GM12878 (cell line): ENCODE measurements at regions of chr2 and their contacts with region 1.

Region 1: GRCh38 chr2:54704688-54705605 is 18.5 kb upstream of the EML6 start:
- DNase-seq: no peak
- ATAC-seq: peak; percentile 78
- H3K4me3 ChIP-seq: no peak overlapping the region
- H3K27ac ChIP-seq: no peak overlapping the region
- H3K4me1 ChIP-seq: no peaks in the 10 kb centered on the region
- H3K27me3 ChIP-seq: peaks cover 0 to 5% of the 10 kb centered on the region in 2 experiments; a peak in 2 of 4 replicates
- CTCF ChIP-seq: peak; percentile 35 to 77 (median 47); a peak in 4 of 6 replicates
- EP300 ChIP-seq: no peak
- POLR2A ChIP-seq: no peak
- RAD21 ChIP-seq: peak; percentile 86

Region 2: GRCh38 chr2:54492335-54492734 is 212.6 kb before region 1 on chr2:
- CTCF ChIA-PET with region 1: interaction called, 12 read pairs
- POLR2A ChIA-PET with region 1: no interaction called
- RAD21 ChIA-PET with region 1: no interaction called
- SMC1A ChIA-PET with region 1: interaction called, 3 read pairs
- in situ Hi-C with region 1: no loop called
- intact Hi-C with region 1: no loop called
- DNase-seq: no peak
- ATAC-seq: no peak
- H3K4me3 ChIP-seq: no peak overlapping the region
- H3K27ac ChIP-seq: no peak overlapping the region
- H3K4me1 ChIP-seq: no peaks in the 10 kb centered on the region
- H3K27me3 ChIP-seq: no peaks in the 10 kb centered on the region
- CTCF ChIP-seq: no peak
- EP300 ChIP-seq: no peak
- POLR2A ChIP-seq: no peak
- RAD21 ChIP-seq: no peak

Region 3: DNA sequence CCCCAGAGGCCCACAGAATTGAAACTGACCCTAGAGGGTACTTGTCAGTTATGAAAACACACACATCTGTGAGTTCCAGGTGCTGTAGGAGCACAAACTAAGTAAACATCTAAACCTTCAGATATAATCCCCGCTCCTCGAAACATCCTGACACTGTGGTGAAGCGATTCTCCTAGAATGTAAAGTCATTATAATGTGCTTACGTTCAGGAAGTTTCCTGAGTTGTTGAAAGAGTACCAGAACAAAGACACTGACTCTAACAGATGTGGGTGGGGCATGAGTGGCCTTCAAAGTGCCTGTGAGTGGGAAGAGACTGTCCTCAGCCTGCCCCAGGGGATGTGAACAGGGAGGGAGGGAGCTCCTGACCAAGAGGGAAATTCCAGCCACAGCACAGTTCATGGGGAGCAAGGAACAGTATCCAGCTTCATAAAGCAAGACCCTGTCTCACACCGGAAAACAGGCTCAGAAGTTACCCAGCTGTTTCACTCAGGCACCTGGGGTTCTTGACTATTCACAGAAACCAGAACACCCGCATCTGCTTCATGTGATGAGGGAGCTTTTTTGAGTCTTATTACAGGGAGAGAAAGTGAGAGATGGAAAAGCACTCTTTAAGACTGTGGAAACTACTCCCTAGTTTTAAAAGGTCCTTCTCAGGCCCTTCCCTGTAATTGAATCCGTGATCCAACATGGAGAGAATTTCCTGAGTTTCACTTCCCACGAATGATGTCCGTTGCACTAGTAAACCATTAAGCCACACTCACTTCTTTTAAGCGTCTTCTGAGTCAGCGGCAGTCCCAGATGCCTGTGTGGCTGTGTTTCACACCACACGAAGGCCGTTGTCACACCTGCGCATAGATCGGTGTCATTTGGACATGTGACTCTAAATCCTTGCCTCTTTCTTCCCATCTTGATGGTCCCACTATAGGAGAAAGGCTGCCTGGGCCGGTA is 70.1 kb before region 1 on chr2:
- CTCF ChIA-PET with region 1: interaction called, 5 read pairs
- POLR2A ChIA-PET with region 1: no interaction called
- RAD21 ChIA-PET with region 1: interaction called, 5 read pairs
- SMC1A ChIA-PET with region 1: interaction called, 12 read pairs
- in situ Hi-C with region 1: no loop called
- intact Hi-C with region 1: no loop called
- DNase-seq: peak; percentile 93
- ATAC-seq: peak; percentile 81
- H3K4me3 ChIP-seq: peak overlapping the region; percentile 38
- H3K27ac ChIP-seq: peak overlapping the region; percentile 95
- H3K4me1 ChIP-seq: peaks cover 57% of the 10 kb centered on the region
- H3K27me3 ChIP-seq: no peaks in the 10 kb centered on the region
- CTCF ChIP-seq: no peak
- EP300 ChIP-seq: peak; percentile 81 to 84; a peak in 2 of 4 replicates
- POLR2A ChIP-seq: peak; percentile 52
- RAD21 ChIP-seq: 0 out of 2 replicates have a peak, but pooled peaks have one; percentile 0

Region 4: GRCh38 chr2:54673501-54673998 is 31.4 kb before region 1 on chr2:
- CTCF ChIA-PET with region 1: interaction called, 42 read pairs
- POLR2A ChIA-PET with region 1: interaction called, 7 read pairs
- RAD21 ChIA-PET with region 1: interaction called, 29 read pairs
- SMC1A ChIA-PET with region 1: interaction called, 187 read pairs
- in situ Hi-C with region 1: no loop called
- intact Hi-C with region 1: no loop called
- DNase-seq: no peak
- ATAC-seq: peak; percentile 76
- H3K4me3 ChIP-seq: no peak overlapping the region
- H3K27ac ChIP-seq: peak overlapping the region; percentile 70
- H3K4me1 ChIP-seq: peaks cover 20% of the 10 kb centered on the region
- H3K27me3 ChIP-seq: no peaks in the 10 kb centered on the region
- CTCF ChIP-seq: no peak
- EP300 ChIP-seq: no peak
- POLR2A ChIP-seq: no peak
- RAD21 ChIP-seq: no peak

Region 5: DNA sequence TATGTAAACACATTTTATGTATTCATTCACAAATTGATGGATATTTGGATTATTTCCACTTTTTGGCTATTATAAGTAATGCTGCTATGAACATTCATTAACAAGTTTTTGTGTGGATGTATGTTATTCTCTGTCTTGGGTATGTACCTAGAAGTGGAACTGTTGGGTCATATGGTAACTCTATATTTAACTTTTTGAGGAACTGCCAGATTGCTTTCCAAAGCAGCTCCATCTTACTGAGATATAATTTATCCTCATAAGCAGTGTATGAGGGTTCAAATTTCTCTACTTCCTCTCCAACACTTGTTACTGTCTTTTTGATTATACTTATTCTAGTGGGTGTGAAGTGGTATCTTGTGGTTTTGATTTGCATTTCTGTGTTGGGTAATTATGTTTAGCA is 11.4 kb after region 1 on chr2:
- CTCF ChIA-PET with region 1: interaction called, 26 read pairs
- POLR2A ChIA-PET with region 1: no interaction called
- RAD21 ChIA-PET with region 1: interaction called, 6 read pairs
- SMC1A ChIA-PET with region 1: interaction called, 6 read pairs
- in situ Hi-C with region 1: no loop called
- intact Hi-C with region 1: no loop called
- DNase-seq: no peak
- ATAC-seq: peak; percentile 27; the same call in 1 of the 3 replicates
- H3K4me3 ChIP-seq: no peak overlapping the region
- H3K27ac ChIP-seq: no peak overlapping the region
- H3K4me1 ChIP-seq: no peaks in the 10 kb centered on the region
- H3K27me3 ChIP-seq: peaks cover 0 to 4% of the 10 kb centered on the region in 2 experiments; a peak in 3 of 4 replicates
- CTCF ChIP-seq: no peak
- EP300 ChIP-seq: no peak
- POLR2A ChIP-seq: no peak
- RAD21 ChIP-seq: no peak